Naive thymus-derived CD4-positive, alpha-beta T cell (primary cell): ENCODE measurements at regions of chr3 and their contacts with region 1.

Region 1: DNA sequence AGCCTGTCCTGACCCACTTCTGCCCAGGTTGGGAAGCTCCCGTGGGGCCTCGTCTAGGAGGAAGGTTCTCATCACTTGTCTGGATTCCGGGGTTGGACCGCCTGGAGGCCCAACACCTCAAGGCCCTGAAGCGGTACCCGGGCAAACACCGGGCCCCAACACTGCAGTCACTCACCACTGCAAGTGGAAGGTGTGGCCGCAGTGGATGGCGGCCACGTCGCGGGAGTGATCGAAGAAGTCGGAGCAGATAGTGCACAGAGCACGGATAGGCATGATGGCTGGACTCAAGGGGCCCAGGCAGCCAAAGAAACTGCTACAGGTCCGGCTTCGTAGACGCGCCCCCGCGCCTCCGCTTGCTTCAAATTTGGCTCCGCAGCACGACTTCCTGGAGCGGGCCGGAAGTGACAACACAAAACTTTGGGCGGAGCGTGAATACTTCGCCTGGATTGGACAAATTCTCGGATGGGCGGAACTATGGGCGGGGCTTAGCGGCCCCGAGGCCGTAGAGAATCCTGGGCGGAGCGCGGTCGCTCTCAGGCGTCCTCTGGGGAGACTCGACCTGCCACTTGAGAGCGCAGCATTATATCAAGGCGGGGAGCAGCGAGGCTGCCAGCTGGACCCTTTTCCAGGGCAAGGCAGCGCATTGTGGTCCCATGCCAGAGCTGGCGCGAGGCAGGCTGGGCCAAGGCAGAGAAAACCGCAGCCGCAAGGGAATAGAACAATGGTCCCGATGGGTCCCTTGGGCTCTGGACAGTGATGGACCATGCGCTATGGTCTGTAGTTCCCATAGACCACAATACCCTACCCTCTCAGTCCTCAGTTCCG is at the start of gene TRAIP:
- DNase-seq: peak; percentile 89 to 96 (median 93)
- ATAC-seq: peak; percentile 100
- H3K4me3 ChIP-seq: peak within 1 kb of the TSS; percentile 75
- H3K4me3 Mint-ChIP-seq: peak within 1 kb of the TSS; percentile 80 to 94 (median 88)
- H3K27ac ChIP-seq: peak within 1 kb of the TSS; percentile 71
- H3K27ac Mint-ChIP-seq: peak within 1 kb of the TSS; percentile 70 to 95 (median 92)
- H3K4me1 ChIP-seq: peaks cover 10 to 11% of the 10 kb centered on the region in 2 donors
- H3K4me1 Mint-ChIP-seq: peaks cover 4 to 19% (median 13%) of the 10 kb centered on the region in 7 donors
- H3K27me3 ChIP-seq: no peaks in the 10 kb centered on the region
- H3K27me3 Mint-ChIP-seq: no peaks in the 10 kb centered on the region
- total RNA-seq, gene TRAIP: 4.1 to 22.5 (median 5.7) TPM

Region 2: DNA sequence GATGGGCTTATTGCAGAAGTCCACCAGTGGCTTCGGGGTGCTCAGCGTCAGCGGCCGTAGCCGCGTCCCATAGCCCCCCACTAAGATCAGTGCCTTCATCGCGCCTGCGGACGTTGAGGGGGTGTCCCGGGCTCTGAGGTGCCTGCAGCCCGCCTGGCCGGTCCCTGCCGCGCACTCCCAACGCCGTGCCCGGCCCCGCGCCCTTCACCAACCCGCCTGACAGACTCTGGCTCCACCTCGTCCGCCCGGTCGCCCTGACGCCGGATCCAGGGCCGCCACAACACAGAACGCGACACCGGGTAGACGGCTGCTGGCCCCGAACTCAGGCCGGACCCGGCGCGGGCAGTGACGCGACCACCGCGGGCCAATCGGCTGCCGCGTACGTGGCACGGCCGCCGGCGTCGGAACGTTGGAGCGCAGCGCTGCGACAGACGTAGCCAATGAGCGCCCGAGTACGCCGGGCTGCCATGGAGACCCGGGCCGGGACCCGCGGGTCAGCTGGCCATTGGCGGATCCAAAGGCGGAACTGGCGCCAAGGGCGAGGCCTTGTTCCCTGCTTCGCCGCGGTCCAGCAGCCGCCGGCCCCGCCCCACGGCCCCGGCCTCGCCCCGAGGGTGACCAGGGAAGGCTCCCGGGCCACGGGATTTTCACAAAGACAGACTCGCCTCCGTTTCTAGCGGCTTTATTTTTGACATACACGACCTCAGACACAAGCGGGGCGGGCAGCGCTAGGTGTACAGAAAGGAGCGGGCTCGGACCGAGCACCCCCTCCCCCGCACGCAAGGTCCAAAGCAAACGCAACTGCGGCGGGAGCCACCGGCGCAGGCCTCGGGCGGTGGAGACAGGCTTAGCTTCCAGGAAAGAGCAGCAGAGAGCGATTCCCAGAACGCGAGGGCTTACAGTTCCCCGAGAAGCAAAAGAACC is 132.5 kb before region 1 on chr3 and contains the start of gene GMPPB:
- CTCF ChIA-PET with region 1: no interaction called
- POLR2A ChIA-PET with region 1: interaction called, 4 read pairs
- intact Hi-C with region 1: loop called (anchors 1 to 5 kb)
- DNase-seq: peak; percentile 83 to 95 (median 87)
- ATAC-seq: peak; percentile 85
- H3K4me3 ChIP-seq: peak within 1 kb of the TSS; percentile 89
- H3K4me3 Mint-ChIP-seq: peak within 1 kb of the TSS; percentile 91 to 98 (median 96)
- H3K27ac ChIP-seq: peak within 1 kb of the TSS; percentile 96
- H3K27ac Mint-ChIP-seq: peak within 1 kb of the TSS; percentile 82 to 99 (median 97)
- H3K4me1 ChIP-seq: peaks cover 11 to 17% of the 10 kb centered on the region in 2 donors
- H3K4me1 Mint-ChIP-seq: peaks cover 12 to 37% (median 31%) of the 10 kb centered on the region in 7 donors
- H3K27me3 ChIP-seq: no peaks in the 10 kb centered on the region
- H3K27me3 Mint-ChIP-seq: no peaks in the 10 kb centered on the region
- total RNA-seq, gene GMPPB: 38.3 to 60.4 (median 43.9) TPM

Region 3: GRCh38 chr3:49906004-49906743 is 49.8 kb after region 1 on chr3:
- CTCF ChIA-PET with region 1: no interaction called
- POLR2A ChIA-PET with region 1: interaction called, 3 read pairs
- intact Hi-C with region 1: loop called (anchors 1 kb)
- DNase-seq: peak; percentile 16 to 60 (median 39)
- ATAC-seq: peak; percentile 53
- H3K4me3 ChIP-seq: no peak overlapping the region
- H3K4me3 Mint-ChIP-seq: peak overlapping the region; percentile 39 to 79 (median 64)
- H3K27ac ChIP-seq: peak overlapping the region; percentile 24
- H3K27ac Mint-ChIP-seq: peak overlapping the region; percentile 63 to 91 (median 87)
- H3K4me1 ChIP-seq: peaks cover 15 to 26% of the 10 kb centered on the region in 2 donors
- H3K4me1 Mint-ChIP-seq: peaks cover 18 to 41% (median 27%) of the 10 kb centered on the region in 7 donors
- H3K27me3 ChIP-seq: no peaks in the 10 kb centered on the region
- H3K27me3 Mint-ChIP-seq: no peaks in the 10 kb centered on the region

Region 4: GRCh38 chr3:49939858-49940666 is 83.7 kb after region 1 on chr3 and contains the start of gene RBM6:
- CTCF ChIA-PET with region 1: no interaction called
- POLR2A ChIA-PET with region 1: no interaction called
- intact Hi-C with region 1: loop called (anchors 1 kb)
- DNase-seq: peak; percentile 84 to 95 (median 93)
- ATAC-seq: peak; percentile 98
- H3K4me3 ChIP-seq: peak within 1 kb of the TSS; percentile 88
- H3K4me3 Mint-ChIP-seq: peak within 1 kb of the TSS; percentile 93 to 100 (median 98)
- H3K27ac ChIP-seq: peak within 1 kb of the TSS; percentile 97
- H3K27ac Mint-ChIP-seq: peak within 1 kb of the TSS; percentile 91 to 99 (median 97)
- H3K4me1 ChIP-seq: peaks cover 8 to 15% of the 10 kb centered on the region in 2 donors
- H3K4me1 Mint-ChIP-seq: peaks cover 7 to 41% (median 32%) of the 10 kb centered on the region in 7 donors
- H3K27me3 ChIP-seq: no peaks in the 10 kb centered on the region
- H3K27me3 Mint-ChIP-seq: peaks cover 0 to 1% (median 0%) of the 10 kb centered on the region in 5 donors
- total RNA-seq, gene RBM6: 103 to 208 (median 153) TPM

Region 5: DNA sequence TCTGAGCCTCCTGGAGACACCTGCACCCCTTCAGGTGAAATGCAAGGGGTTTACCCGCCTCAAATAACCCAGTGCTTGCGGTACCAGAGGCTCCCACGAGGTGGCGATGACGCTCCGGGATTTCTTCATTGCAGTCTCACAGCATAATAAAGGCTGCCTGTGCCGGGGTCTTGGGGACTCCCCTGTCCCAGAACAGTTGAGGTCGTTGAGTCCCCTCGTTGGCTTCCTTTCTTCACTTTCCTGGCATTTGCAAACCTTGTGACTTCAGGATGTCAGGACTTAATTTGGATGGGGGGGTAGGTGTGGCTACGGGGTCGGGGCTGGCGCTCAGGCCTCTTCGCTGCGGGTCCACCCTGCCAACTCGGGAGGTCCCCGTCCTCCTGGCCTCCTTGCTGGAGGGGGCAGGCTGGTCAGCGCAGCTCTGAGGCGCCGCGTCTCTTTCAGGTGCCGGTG is 336.3 kb after region 1 on chr3:
- CTCF ChIA-PET with region 1: no interaction called
- POLR2A ChIA-PET with region 1: no interaction called
- intact Hi-C with region 1: no loop called
- DNase-seq: peak; percentile 73 to 90 (median 83)
- ATAC-seq: peak; percentile 53
- H3K4me3 ChIP-seq: no peak overlapping the region
- H3K4me3 Mint-ChIP-seq: peak overlapping the region in 7 of 10 donors; percentile 45 to 67 (median 62)
- H3K27ac ChIP-seq: no peak overlapping the region
- H3K27ac Mint-ChIP-seq: peak overlapping the region in 3 of 9 donors; percentile 51 to 70 (median 65)
- H3K4me1 ChIP-seq: peaks cover 5 to 13% of the 10 kb centered on the region in 2 donors
- H3K4me1 Mint-ChIP-seq: peaks cover 4 to 16% (median 9%) of the 10 kb centered on the region in 7 donors
- H3K27me3 ChIP-seq: no peaks in the 10 kb centered on the region
- H3K27me3 Mint-ChIP-seq: peaks cover 0 to 21% (median 5%) of the 10 kb centered on the region in 5 donors